PC-9 (cell line): ENCODE measurements at regions of chr1 and their contacts with region 1.

Region 1: GRCh38 chr1:64136752-64137411 is 66.5 kb upstream of the UBE2U start:
- DNase-seq: peak; percentile 51 to 75
- H3K4me3 ChIP-seq: no peak overlapping the region
- H3K27ac ChIP-seq: no peak overlapping the region
- H3K4me1 ChIP-seq: peaks cover 38% of the 10 kb centered on the region
- H3K27me3 ChIP-seq: no peaks in the 10 kb centered on the region
- CTCF ChIP-seq: peak; percentile 92

Region 2: GRCh38 chr1:63674238-63674864 is 462.5 kb before region 1 on chr1:
- CTCF ChIA-PET with region 1: no interaction called
- POLR2A ChIA-PET with region 1: no interaction called
- intact Hi-C with region 1: loop called (anchors 5 kb)
- DNase-seq: peak; percentile 83 to 95
- H3K4me3 ChIP-seq: no peak overlapping the region
- H3K27ac ChIP-seq: peak overlapping the region; percentile 41; the same call in 1 of the 2 replicates
- H3K4me1 ChIP-seq: peaks cover 13% of the 10 kb centered on the region
- H3K27me3 ChIP-seq: no peaks in the 10 kb centered on the region
- CTCF ChIP-seq: peak; percentile 82

Region 3: GRCh38 chr1:63773815-63774616 is 362.9 kb before region 1 on chr1 and contains the start of gene ROR1:
- CTCF ChIA-PET with region 1: interaction called, 3 read pairs
- POLR2A ChIA-PET with region 1: no interaction called
- intact Hi-C with region 1: loop called (anchors 2 kb)
- DNase-seq: peak; percentile 72 to 91
- H3K4me3 ChIP-seq: peak within 1 kb of the TSS; percentile 93
- H3K27ac ChIP-seq: peak within 1 kb of the TSS; percentile 60
- H3K4me1 ChIP-seq: peaks cover 50% of the 10 kb centered on the region
- H3K27me3 ChIP-seq: no peaks in the 10 kb centered on the region
- CTCF ChIP-seq: peak; percentile 62
- total RNA-seq, gene ROR1: 16.0 and 19.0 TPM in 2 replicates

Region 4: GRCh38 chr1:63935143-63935542 is 201.7 kb before region 1 on chr1:
- CTCF ChIA-PET with region 1: interaction called, 11 read pairs
- POLR2A ChIA-PET with region 1: no interaction called
- intact Hi-C with region 1: no loop called
- DNase-seq: peak in 1 of 2 experiments; percentile 11
- H3K4me3 ChIP-seq: no peak overlapping the region
- H3K27ac ChIP-seq: no peak overlapping the region
- H3K4me1 ChIP-seq: peaks cover 19% of the 10 kb centered on the region
- H3K27me3 ChIP-seq: no peaks in the 10 kb centered on the region
- CTCF ChIP-seq: peak; percentile 56

Region 5: GRCh38 chr1:64006276-64007051 is 130.4 kb before region 1 on chr1:
- CTCF ChIA-PET with region 1: no interaction called
- POLR2A ChIA-PET with region 1: interaction called, 8 read pairs
- intact Hi-C with region 1: loop called (anchors 2 kb)
- DNase-seq: peak; percentile 71 to 98
- H3K4me3 ChIP-seq: no peak overlapping the region; the same call in 1 of the 2 replicates
- H3K27ac ChIP-seq: peak overlapping the region; percentile 82
- H3K4me1 ChIP-seq: peaks cover 47% of the 10 kb centered on the region
- H3K27me3 ChIP-seq: no peaks in the 10 kb centered on the region
- CTCF ChIP-seq: no peak

Region 6: DNA sequence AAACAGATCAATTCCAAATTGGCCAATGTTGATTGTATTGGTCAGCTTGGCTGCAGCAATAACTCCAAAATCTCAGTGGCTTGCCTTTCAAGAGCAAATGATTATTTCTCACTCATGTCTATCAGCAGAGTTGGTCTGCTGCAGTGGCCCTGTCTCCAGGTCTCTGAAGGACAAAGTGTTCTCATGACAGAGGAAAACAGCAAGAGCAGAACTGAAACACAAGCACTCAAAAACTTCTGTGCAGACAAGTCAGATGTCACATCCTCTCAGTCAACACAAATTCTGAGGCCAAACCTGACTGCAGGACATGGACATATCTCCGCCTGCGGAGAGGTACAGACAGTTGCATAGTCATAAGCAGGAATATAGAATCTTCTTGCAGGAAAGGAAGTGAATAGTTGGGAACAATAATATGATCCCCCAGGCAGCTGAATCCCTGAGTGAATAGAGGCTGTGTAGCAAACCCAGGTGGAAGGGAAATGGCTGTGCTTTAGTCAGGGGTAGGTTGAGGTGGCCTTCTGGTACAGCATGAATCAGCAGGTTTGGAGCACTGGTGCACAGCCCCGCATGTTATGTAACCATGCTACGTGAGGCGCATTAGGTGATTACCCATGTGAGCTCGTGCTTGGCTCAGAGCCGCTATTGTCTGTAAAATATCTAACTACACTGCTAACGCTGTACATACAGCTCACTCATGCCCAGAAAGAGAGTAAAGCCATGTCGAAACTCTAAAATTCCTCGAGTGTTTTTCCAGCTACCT is 49.4 kb after region 1 on chr1:
- CTCF ChIA-PET with region 1: interaction called, 10 read pairs
- POLR2A ChIA-PET with region 1: no interaction called
- intact Hi-C with region 1: no loop called
- DNase-seq: no peak
- H3K4me3 ChIP-seq: no peak overlapping the region
- H3K27ac ChIP-seq: no peak overlapping the region
- H3K4me1 ChIP-seq: peaks cover 8% of the 10 kb centered on the region; the same call in 1 of the 2 replicates
- H3K27me3 ChIP-seq: no peaks in the 10 kb centered on the region
- CTCF ChIP-seq: no peak